Endothelial cell of umbilical vein (primary cell): ENCODE measurements at regions of chr10 and their contacts with region 1.

Region 1: GRCh38 chr10:33008499-33009243 is 50.6 kb upstream of the ITGB1 start:
- DNase-seq: peak; percentile 82
- H3K4me3 ChIP-seq: no peak overlapping the region
- H3K27ac ChIP-seq: peak overlapping the region; percentile 43
- H3K4me1 ChIP-seq: peaks cover 15% of the 10 kb centered on the region
- H3K27me3 ChIP-seq: no peaks in the 10 kb centered on the region
- CTCF ChIP-seq: peak; percentile 90 to 92
- POLR2A ChIP-seq: no peak

Region 2: GRCh38 chr10:32378363-32379317 is 630.0 kb before region 1 on chr10:
- CTCF ChIA-PET with region 1: interaction called, 3 read pairs
- POLR2A ChIA-PET with region 1: no interaction called
- dilution Hi-C with region 1: no loop called
- intact Hi-C with region 1: loop called (anchors 2 kb)
- DNase-seq: peak; percentile 89
- H3K4me3 ChIP-seq: peak overlapping the region; percentile 87 to 99 (median 93)
- H3K27ac ChIP-seq: peak overlapping the region; percentile 85
- H3K4me1 ChIP-seq: peaks cover 13% of the 10 kb centered on the region
- H3K27me3 ChIP-seq: no peaks in the 10 kb centered on the region
- CTCF ChIP-seq: no peak
- POLR2A ChIP-seq: peak; percentile 60

Region 3: DNA sequence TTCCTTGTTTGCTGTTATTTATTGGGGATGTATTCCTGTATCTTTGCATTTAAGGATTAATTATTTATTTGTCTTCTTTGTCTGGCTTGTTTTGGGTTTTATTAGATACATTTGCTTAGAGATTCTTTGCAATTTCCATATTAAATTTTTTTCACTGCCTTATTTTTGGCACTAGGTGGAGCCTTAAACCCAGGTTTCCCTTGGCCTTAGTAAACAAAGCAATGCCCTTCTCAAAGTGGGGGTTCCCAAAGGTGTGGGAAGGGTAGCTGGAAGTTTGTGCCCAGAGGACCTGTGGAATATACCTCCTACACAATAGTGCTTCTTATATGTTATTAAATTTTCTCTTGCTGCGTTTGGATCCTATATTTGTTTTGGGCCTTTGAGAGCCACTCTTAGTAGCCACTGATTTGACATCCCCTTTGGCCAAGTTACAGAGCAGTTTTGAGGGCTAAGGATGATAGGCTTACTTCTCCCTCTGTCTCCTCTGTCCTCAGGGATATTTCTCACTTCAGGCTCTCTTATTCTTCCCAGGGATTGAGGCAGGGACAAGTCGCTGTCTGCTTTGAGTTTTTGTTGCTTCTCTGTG is 213.0 kb before region 1 on chr10:
- CTCF ChIA-PET with region 1: interaction called, 33 read pairs
- POLR2A ChIA-PET with region 1: no interaction called
- dilution Hi-C with region 1: no loop called
- intact Hi-C with region 1: loop called (anchors 1 kb)
- DNase-seq: peak; percentile 55
- H3K4me3 ChIP-seq: no peak overlapping the region
- H3K27ac ChIP-seq: no peak overlapping the region
- H3K4me1 ChIP-seq: no peaks in the 10 kb centered on the region
- H3K27me3 ChIP-seq: peaks cover 0 to 2% of the 10 kb centered on the region in 2 experiments
- CTCF ChIP-seq: peak; percentile 39 to 45
- POLR2A ChIP-seq: no peak

Region 4: GRCh38 chr10:32909456-32909855 is 99.2 kb before region 1 on chr10:
- CTCF ChIA-PET with region 1: interaction called, 16 read pairs
- POLR2A ChIA-PET with region 1: no interaction called
- dilution Hi-C with region 1: no loop called
- intact Hi-C with region 1: no loop called
- DNase-seq: no peak
- H3K4me3 ChIP-seq: no peak overlapping the region
- H3K27ac ChIP-seq: no peak overlapping the region
- H3K4me1 ChIP-seq: no peaks in the 10 kb centered on the region
- H3K27me3 ChIP-seq: no peaks in the 10 kb centered on the region
- CTCF ChIP-seq: no peak
- POLR2A ChIP-seq: no peak

Region 5: GRCh38 chr10:32950591-32951108 is 58.0 kb before region 1 on chr10:
- CTCF ChIA-PET with region 1: interaction called, 22 read pairs
- POLR2A ChIA-PET with region 1: no interaction called
- dilution Hi-C with region 1: no loop called
- intact Hi-C with region 1: no loop called
- DNase-seq: peak; percentile 35
- H3K4me3 ChIP-seq: peak overlapping the region in 1 of 3 experiments; percentile 42
- H3K27ac ChIP-seq: peak overlapping the region; percentile 49
- H3K4me1 ChIP-seq: peaks cover 60% of the 10 kb centered on the region
- H3K27me3 ChIP-seq: no peaks in the 10 kb centered on the region
- CTCF ChIP-seq: no peak
- POLR2A ChIP-seq: no peak

Region 6: GRCh38 chr10:33115738-33116719 is 107.4 kb after region 1 on chr10:
- CTCF ChIA-PET with region 1: interaction called, 28 read pairs
- POLR2A ChIA-PET with region 1: no interaction called
- dilution Hi-C with region 1: no loop called
- intact Hi-C with region 1: no loop called
- DNase-seq: peak; percentile 81
- H3K4me3 ChIP-seq: no peak overlapping the region
- H3K27ac ChIP-seq: no peak overlapping the region
- H3K4me1 ChIP-seq: peaks cover 3% of the 10 kb centered on the region
- H3K27me3 ChIP-seq: no peaks in the 10 kb centered on the region
- CTCF ChIP-seq: peak; percentile 75 to 77
- POLR2A ChIP-seq: no peak